HAP-1 (cell line): ENCODE measurements at regions of chr12 and their contacts with region 1.

Region 1: GRCh38 chr12:78118036-78118435 is 287.3 kb downstream of the NAV3 start:
- DNase-seq: peak; percentile 55 to 70
- H3K4me3 ChIP-seq: no peak overlapping the region
- H3K4me1 ChIP-seq: peaks cover 3% of the 10 kb centered on the region
- H3K27me3 ChIP-seq: no peaks in the 10 kb centered on the region

Region 2: DNA sequence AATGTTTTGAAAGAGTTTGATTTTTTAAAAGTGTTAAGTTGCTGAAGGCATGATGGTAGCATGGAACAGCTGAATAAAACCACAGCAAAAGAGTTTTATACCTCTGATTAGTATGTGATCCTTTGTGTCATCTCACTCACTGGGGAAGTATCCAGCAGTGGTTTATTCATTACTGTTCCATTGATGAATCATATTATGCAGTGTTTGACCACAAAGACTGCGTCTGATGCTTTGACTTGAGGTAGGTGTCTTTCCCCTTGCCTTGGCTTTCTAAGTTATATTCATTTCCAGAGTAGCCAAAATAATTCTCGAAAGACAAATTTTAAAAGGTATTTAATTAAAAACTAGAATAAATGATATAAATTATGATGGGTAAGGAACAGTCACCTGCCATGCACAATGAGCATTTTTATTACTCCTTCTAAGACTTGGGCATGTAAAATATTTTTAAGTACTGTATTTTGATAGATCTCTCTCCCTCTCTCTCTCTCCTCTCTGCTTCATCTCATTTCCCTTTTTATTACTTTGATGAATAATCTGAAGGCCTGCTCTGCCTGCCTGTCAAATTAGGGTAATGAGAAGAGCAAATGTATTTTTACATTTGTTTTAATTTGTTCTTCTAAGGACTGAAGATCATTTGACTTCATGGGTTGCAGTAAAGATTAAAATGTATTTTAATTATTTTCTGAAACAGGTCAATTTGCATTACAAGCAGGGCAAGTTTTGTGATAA is 122.4 kb before region 1 on chr12:
- in situ Hi-C with region 1: loop called (anchors 5 kb)
- DNase-seq: no peak
- H3K4me3 ChIP-seq: no peak overlapping the region
- H3K4me1 ChIP-seq: peaks cover 3% of the 10 kb centered on the region; the same call in 1 of the 2 replicates
- H3K27me3 ChIP-seq: no peaks in the 10 kb centered on the region